ENCODE measurements at regions of chr12 and their contacts with region 1.

Region 1: DNA sequence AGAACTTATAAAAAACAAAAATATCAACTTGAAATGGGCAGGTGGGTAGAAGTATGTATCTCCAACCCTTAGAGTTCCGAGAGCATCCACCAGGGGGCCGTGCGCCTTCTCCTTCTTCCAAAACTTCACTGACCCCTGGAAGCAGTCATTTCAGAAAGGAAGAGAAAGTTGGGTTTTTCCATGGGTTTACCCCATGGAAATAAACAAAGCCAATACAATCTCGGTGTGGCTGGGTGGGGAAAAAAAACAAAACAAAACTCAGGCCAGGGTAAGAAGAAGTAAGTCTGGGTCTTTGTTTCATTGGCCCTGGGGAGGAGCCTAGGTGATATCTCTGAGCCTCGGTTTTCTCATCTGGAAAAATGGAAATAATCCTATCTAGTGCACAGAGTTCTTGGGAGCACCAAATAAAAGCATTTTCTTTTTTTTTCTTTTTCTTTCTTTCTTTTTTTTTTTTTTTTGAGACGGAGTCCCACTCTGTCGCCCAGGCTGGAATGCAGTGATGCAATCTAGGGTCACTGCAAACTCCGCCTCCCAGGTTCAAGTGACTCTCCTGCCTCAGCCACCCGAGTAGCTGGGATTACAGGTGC is 33.6 kb upstream of the HNF1A start:
- DNase-seq: peak; percentile 70 to 82
- ATAC-seq: peak; percentile 90 to 92
- H3K4me3 ChIP-seq: no peak overlapping the region
- H3K27ac ChIP-seq: no peak overlapping the region
- H3K4me1 ChIP-seq: peaks cover 4% of the 10 kb centered on the region; the same call in 1 of the 3 replicates
- CTCF ChIP-seq: peak; percentile 74
- EP300 ChIP-seq: no peak
- POLR2A ChIP-seq: no peak
- RAD21 ChIP-seq: peak; percentile 65 to 80

Region 2: DNA sequence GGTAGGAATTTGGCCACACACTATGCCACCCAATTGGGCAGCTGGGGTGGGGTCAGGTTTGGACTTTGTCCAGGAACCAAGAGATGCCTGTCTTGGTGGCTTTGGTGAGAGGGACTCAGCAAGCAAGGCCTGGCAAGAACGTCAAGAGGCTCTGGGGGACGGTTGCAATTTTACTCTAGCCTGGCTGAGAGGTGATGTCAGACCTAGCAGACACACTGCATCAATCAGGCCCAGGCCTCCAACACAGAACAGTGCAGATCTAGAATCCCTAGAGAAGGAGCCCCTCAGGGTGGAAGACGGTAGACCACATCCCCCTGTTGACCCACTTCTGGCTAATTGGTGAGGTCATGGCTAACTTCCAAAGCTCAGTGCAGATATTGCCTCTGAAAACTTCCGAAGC is 236.1 kb before region 1 on chr12:
- CTCF ChIA-PET with region 1: no interaction called
- POLR2A ChIA-PET with region 1: no interaction called
- DNase-seq: no peak
- ATAC-seq: no peak
- H3K4me3 ChIP-seq: no peak overlapping the region
- H3K27ac ChIP-seq: no peak overlapping the region
- H3K4me1 ChIP-seq: peaks cover 20% of the 10 kb centered on the region
- CTCF ChIP-seq: no peak
- EP300 ChIP-seq: no peak
- POLR2A ChIP-seq: no peak
- RAD21 ChIP-seq: no peak

Region 3: GRCh38 chr12:120932956-120933487 is 11.7 kb before region 1 on chr12:
- CTCF ChIA-PET with region 1: interaction called, 10 read pairs
- POLR2A ChIA-PET with region 1: no interaction called
- DNase-seq: no peak
- ATAC-seq: no peak
- H3K4me3 ChIP-seq: no peak overlapping the region
- H3K27ac ChIP-seq: no peak overlapping the region
- H3K4me1 ChIP-seq: no peaks in the 10 kb centered on the region
- CTCF ChIP-seq: no peak
- EP300 ChIP-seq: no peak
- POLR2A ChIP-seq: no peak
- RAD21 ChIP-seq: no peak

Region 4: GRCh38 chr12:120961604-120962531 is 17.1 kb after region 1 on chr12:
- CTCF ChIA-PET with region 1: interaction called, 12 read pairs
- POLR2A ChIA-PET with region 1: no interaction called
- DNase-seq: peak; percentile 46 to 66
- ATAC-seq: peak; percentile 55 to 59; a peak in 5 of 6 replicates
- H3K4me3 ChIP-seq: no peak overlapping the region
- H3K27ac ChIP-seq: peak overlapping the region; percentile 15 to 39; a peak in 4 of 6 replicates
- H3K4me1 ChIP-seq: peaks cover 42% of the 10 kb centered on the region
- CTCF ChIP-seq: no peak
- EP300 ChIP-seq: no peak
- POLR2A ChIP-seq: no peak
- RAD21 ChIP-seq: no peak

Measured in A549 (cell line).